ENCODE measurements at regions of chr3 and their contacts with region 1.

Region 1: DNA sequence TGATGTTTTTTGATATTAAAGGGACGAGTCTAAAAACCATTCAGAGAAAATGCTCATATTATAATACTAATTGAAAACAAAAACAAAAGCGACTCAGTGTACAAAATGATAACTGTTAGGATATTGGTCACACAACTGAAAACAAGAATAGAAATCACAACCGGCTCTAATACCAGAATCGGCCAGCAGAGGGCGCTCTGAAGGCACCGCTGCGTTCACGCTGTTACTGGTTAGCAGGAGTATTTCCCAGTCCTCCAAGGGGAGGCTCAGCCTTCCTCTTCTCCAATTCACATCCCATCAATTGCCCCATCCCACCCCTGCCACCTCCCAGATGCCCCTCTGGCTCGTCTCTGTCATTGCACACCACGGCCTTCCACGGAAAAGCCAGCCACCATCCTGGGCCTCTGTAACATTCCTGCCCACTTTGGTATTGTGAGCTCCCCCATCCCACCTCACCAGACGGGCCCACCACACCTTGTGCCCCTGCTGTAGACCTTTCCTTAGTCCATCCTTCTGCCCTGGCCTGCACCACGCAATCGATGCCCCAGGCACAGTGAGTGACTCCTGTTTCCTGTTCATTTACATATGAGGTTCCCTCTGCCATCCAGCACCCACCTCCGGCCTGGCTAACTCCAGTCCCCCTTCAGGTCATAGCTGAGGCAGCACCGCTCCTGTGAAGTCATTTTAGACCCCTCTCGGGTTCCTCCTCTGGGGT is 8.5 kb downstream of the FAM107A start:
- DNase-seq: peak; percentile 55
- H3K4me3 Mint-ChIP-seq: no peak overlapping the region
- H3K27ac Mint-ChIP-seq: peak overlapping the region; percentile 1
- H3K4me1 Mint-ChIP-seq: no peaks in the 10 kb centered on the region
- H3K27me3 Mint-ChIP-seq: peaks cover 3% of the 10 kb centered on the region

Region 2: DNA sequence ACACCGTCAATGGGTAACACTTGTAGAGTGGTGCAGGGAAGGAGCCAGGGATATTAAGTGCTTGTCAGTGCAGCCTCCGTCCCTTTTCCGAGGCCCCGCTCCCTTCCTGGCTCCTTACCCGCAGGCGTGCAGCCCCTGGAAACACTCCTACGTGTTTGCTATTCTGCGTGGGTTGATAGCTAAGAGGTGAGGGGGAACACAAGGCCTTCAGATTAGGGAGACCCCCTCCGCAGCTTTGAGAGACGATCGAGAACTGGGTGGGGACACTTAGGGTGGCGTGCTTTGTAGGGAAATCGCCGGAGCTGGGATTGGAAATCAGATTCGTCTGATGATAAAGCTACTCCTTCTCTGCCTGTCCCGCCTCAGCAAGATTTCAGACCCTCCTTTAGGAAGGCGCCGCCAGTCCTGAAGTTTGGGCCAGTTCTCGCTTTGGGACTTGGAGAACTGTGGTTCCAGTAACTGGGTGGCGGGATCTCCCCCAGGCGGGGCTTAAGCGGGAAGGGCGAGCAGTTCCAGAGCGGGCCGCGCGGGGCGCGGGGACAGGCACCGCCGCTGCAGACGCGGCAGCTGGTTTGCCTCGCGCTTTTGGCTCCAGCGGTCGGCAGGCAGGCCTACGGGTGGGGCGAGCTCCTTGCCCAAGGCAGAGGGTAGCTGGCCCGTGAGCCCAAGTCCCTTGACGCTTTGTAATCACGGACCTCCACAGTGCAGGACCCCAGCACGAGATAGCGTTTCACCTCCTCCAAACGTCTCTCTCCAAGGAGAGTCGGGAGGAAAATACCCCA is 16.5 kb after region 1 on chr3:
- intact Hi-C with region 1: loop called (anchors 1 kb)
- DNase-seq: peak; percentile 44
- H3K4me3 Mint-ChIP-seq: peak overlapping the region; percentile 90
- H3K27ac Mint-ChIP-seq: peak overlapping the region; percentile 3
- H3K4me1 Mint-ChIP-seq: peaks cover 22% of the 10 kb centered on the region
- H3K27me3 Mint-ChIP-seq: peaks cover 47% of the 10 kb centered on the region

Region 3: GRCh38 chr3:58630076-58630709 is 61.5 kb after region 1 on chr3:
- intact Hi-C with region 1: loop called (anchors 1 kb)
- DNase-seq: peak; percentile 46
- H3K4me3 Mint-ChIP-seq: no peak overlapping the region
- H3K27ac Mint-ChIP-seq: no peak overlapping the region
- H3K4me1 Mint-ChIP-seq: no peaks in the 10 kb centered on the region
- H3K27me3 Mint-ChIP-seq: no peaks in the 10 kb centered on the region